ENCODE measurements at regions of chr4 and their contacts with region 1.

Region 1: GRCh38 chr4:25113915-25114904 is 46.0 kb downstream of the SEPSECS start:
- DNase-seq: no peak
- H3K4me3 ChIP-seq: no peak overlapping the region
- H3K27ac ChIP-seq: no peak overlapping the region
- H3K4me1 ChIP-seq: peaks cover 0 to 30% (median 23%) of the 10 kb centered on the region in 4 donors
- H3K27me3 ChIP-seq: no peaks in the 10 kb centered on the region
- CTCF ChIP-seq: no peak
- EP300 ChIP-seq: no peak
- POLR2A ChIP-seq: no peak

Region 2: DNA sequence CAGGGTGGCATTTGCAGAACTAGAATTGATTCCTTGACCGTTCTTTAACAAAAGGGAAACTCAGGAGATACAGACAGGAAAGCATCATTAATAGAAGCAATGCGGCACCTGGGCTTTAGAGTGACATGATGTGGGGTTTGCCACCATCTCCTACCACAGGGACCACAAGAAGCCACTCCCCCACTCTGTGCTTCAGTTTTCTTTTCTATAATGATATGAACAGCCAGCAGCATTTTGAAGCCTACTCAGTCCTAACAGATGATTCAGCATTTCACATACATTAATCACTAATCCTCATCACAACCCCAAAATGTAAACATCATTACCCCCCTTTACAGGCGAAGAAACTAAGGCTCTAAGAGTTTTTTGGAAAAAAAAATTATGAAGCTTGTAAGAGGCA is 224.2 kb before region 1 on chr4:
- intact Hi-C with region 1: no loop called
- DNase-seq: peak; percentile 0
- H3K4me3 ChIP-seq: no peak overlapping the region
- H3K27ac ChIP-seq: no peak overlapping the region
- H3K4me1 ChIP-seq: peaks cover 0 to 6% (median 2%) of the 10 kb centered on the region in 4 donors
- H3K27me3 ChIP-seq: no peaks in the 10 kb centered on the region
- CTCF ChIP-seq: no peak
- EP300 ChIP-seq: no peak
- POLR2A ChIP-seq: no peak

Region 3: GRCh38 chr4:24912252-24913118 is 201.7 kb before region 1 on chr4 and contains the start of gene CCDC149:
- intact Hi-C with region 1: no loop called
- DNase-seq: peak; percentile 84
- H3K4me3 ChIP-seq: peak within 1 kb of the TSS; percentile 36 to 93 (median 80)
- H3K27ac ChIP-seq: peak within 1 kb of the TSS; percentile 87 to 95 (median 92)
- H3K4me1 ChIP-seq: peaks cover 0 to 23% (median 11%) of the 10 kb centered on the region in 4 donors
- H3K27me3 ChIP-seq: no peaks in the 10 kb centered on the region
- CTCF ChIP-seq: no peak
- EP300 ChIP-seq: no peak
- POLR2A ChIP-seq: no peak
- total RNA-seq, gene CCDC149: 11.8 to 21.3 (median 16.5) TPM

Region 4: DNA sequence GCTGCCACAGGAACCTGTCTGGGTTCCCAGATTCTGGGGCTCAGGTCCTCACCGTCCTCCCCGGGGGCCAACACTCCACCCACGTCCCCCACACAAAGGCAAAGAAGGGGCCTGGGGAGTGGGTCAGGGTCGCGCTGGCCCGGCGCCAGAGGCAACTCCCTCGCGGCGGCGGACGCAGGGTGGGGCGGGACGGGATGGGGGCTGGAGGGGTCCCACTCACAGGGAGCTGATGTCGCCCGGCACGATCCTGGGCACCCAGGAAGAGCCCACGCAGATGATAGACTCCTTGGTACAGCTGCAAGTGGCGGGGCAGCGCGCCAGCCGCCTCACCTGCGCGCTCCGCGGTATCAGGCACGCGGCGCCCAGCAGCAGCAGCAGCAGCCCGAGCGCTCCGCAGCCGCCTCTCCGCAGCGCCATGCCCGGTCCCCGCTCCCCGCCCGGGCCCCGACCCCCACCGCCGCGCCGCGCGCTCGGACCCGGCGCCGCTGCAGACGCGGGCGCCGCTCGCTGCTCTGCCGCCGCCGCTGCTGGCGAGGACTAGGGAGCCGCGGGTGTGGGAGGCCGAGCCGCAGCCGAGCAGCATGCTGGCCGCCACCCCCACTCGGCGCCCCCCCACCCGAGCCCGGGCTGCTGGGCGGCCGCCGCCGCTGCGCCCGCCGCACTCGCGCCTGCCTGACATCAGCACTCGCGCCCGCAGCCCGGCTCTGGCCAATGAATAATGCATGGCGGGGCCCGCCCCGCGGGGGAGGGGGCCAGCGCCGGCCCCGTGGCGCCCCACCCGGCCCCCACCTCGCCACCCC is 83.7 kb before region 1 on chr4 and contains the start of gene LGI2:
- intact Hi-C with region 1: loop called (anchors 5 kb)
- DNase-seq: peak; percentile 74
- H3K4me3 ChIP-seq: peak within 1 kb of the TSS; percentile 29 to 68 (median 58)
- H3K27ac ChIP-seq: peak within 1 kb of the TSS; percentile 69 to 83 (median 76)
- H3K4me1 ChIP-seq: peaks cover 0 to 28% (median 16%) of the 10 kb centered on the region in 4 donors
- H3K27me3 ChIP-seq: no peaks in the 10 kb centered on the region
- CTCF ChIP-seq: no peak
- EP300 ChIP-seq: no peak
- POLR2A ChIP-seq: no peak
- total RNA-seq, gene LGI2: 1.2 to 6.7 (median 3.5) TPM